ENCODE measurements at regions of chr2 and their contacts with region 1.

Region 1: DNA sequence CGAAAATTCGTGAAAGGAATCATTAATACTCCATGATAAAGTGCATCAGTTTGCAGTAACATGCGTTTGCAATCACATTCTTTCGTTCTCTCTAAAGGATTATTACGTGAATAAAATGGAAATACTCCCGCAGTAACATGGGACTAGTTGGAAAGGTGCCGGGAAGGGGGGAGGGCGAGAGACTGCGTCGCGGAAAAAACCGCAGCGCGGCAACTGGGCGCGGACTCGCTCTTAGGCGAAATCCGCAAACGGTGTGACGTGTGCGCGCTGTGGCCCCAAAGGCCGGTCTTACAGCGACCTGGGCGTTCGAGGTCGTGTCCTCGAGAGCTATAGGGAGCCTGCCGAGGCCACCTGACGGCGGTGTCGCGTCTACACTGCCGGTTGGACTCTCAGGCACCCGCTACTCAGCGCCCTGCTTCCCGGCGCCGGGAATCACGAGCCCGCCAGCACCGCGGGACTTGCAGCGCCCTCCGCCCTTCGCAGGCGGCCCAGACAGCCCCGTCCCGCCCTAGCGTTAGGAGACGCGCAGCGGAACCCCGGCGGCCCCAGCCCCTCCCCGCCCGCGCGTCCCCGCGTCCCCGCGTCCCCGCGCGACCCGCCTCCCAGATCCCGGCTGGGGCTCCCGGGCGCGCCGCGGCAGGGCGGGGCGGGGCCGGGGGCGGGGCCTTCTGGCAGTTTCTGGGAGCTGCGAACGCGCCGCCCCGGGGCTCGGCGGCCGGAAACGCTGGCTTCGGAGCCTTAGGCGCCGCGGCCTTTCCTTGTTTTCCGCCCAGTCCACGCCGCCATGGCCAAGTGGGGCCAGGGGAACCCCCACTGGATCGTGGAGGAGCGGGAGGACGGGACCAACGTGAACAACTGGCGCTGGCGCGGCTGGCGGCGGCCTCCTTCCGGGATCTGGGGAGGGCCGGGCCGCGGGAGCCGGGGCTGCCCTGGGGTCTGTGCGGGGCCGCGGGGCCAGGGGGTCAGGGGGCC is 15.1 kb downstream of the C2orf74 start:
- DNase-seq: peak; percentile 94
- ATAC-seq: peak; percentile 92
- H3K4me3 ChIP-seq: peak overlapping the region; percentile 85 to 94 (median 93)
- H3K27ac ChIP-seq: peak overlapping the region; percentile 93
- H3K4me1 ChIP-seq: peaks cover 63% of the 10 kb centered on the region
- H3K27me3 ChIP-seq: no peaks in the 10 kb centered on the region
- CTCF ChIP-seq: peak; percentile 59
- EP300 ChIP-seq: peak; percentile 17 to 78; a peak in 2 of 4 replicates
- POLR2A ChIP-seq: peak; percentile 96 to 99
- RAD21 ChIP-seq: peak; percentile 82

Region 2: GRCh38 chr2:60023256-60023985 is 1153.6 kb before region 1 on chr2:
- CTCF ChIA-PET with region 1: no interaction called
- POLR2A ChIA-PET with region 1: no interaction called
- in situ Hi-C with region 1: no loop called
- intact Hi-C with region 1: no loop called
- DNase-seq: no peak
- ATAC-seq: no peak
- H3K4me3 ChIP-seq: no peak overlapping the region
- H3K27ac ChIP-seq: no peak overlapping the region
- H3K4me1 ChIP-seq: no peaks in the 10 kb centered on the region
- H3K27me3 ChIP-seq: no peaks in the 10 kb centered on the region
- CTCF ChIP-seq: no peak
- EP300 ChIP-seq: no peak
- POLR2A ChIP-seq: no peak
- RAD21 ChIP-seq: no peak

Region 3: GRCh38 chr2:61065715-61066709 is 111.0 kb before region 1 on chr2 and contains the start of gene SANBR:
- CTCF ChIA-PET with region 1: no interaction called
- POLR2A ChIA-PET with region 1: interaction called, 16 read pairs
- in situ Hi-C with region 1: no loop called
- intact Hi-C with region 1: no loop called
- DNase-seq: peak; percentile 78
- ATAC-seq: peak; percentile 97
- H3K4me3 ChIP-seq: peak within 1 kb of the TSS; percentile 86 to 97 (median 94)
- H3K27ac ChIP-seq: peak within 1 kb of the TSS; percentile 90
- H3K4me1 ChIP-seq: peaks cover 28% of the 10 kb centered on the region
- H3K27me3 ChIP-seq: no peaks in the 10 kb centered on the region
- CTCF ChIP-seq: no peak; the same call in 1 of the 2 replicates
- EP300 ChIP-seq: no peak
- POLR2A ChIP-seq: peak; percentile 49 to 84
- RAD21 ChIP-seq: peak; percentile 53
- total RNA-seq, gene SANBR: 20.9 and 22.9 TPM in 2 replicates

Region 4: DNA sequence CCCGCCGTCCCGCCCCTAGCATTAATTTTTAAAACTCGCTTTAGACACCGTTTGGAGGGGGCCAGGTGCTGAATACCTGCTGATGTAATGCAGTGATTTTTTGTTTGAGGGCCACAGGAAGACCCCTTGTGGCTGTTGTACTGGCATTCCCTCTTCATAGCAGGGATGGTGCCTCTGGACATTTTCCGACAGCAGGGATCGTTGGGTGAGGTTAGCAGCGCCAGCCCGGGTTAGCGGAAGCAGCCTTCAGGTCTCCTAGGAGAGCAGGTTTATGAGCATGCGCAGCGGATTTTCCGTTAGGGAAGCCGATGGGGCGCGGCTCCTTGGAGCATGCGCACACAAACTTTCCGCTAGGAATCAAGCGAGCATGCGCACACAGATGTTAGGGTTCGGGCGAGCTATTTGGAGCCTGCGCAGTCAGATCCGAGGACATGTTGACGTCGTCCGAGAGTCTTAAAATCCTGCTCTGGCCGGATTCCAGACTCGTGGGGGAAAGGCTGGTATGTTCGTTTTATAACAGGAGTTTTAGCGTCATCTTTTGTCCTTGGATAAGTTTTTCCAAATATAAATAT is 32.3 kb before region 1 on chr2:
- CTCF ChIA-PET with region 1: no interaction called
- POLR2A ChIA-PET with region 1: interaction called, 79 read pairs
- in situ Hi-C with region 1: no loop called
- intact Hi-C with region 1: no loop called
- DNase-seq: peak; percentile 99
- ATAC-seq: peak; percentile 99
- H3K4me3 ChIP-seq: peak overlapping the region; percentile 75 to 90 (median 81)
- H3K27ac ChIP-seq: peak overlapping the region; percentile 72
- H3K4me1 ChIP-seq: peaks cover 9% of the 10 kb centered on the region
- H3K27me3 ChIP-seq: no peaks in the 10 kb centered on the region
- CTCF ChIP-seq: peak; percentile 49; the same call in 1 of the 2 replicates
- EP300 ChIP-seq: no peak
- POLR2A ChIP-seq: peak; percentile 86 to 92
- RAD21 ChIP-seq: peak; percentile 21; the same call in 1 of the 2 replicates

Region 5: GRCh38 chr2:61193670-61194571 is 16.9 kb after region 1 on chr2:
- CTCF ChIA-PET with region 1: no interaction called
- POLR2A ChIA-PET with region 1: interaction called, 17 read pairs
- in situ Hi-C with region 1: no loop called
- intact Hi-C with region 1: no loop called
- DNase-seq: no peak
- ATAC-seq: peak; percentile 9; the same call in 2 of the 3 replicates
- H3K4me3 ChIP-seq: no peak overlapping the region
- H3K27ac ChIP-seq: no peak overlapping the region
- H3K4me1 ChIP-seq: no peaks in the 10 kb centered on the region
- H3K27me3 ChIP-seq: no peaks in the 10 kb centered on the region
- CTCF ChIP-seq: no peak
- EP300 ChIP-seq: no peak
- POLR2A ChIP-seq: no peak
- RAD21 ChIP-seq: no peak

Measured in HepG2 (cell line).